ENCODE measurements at regions of chr19 and their contacts with region 1.

Region 1: DNA sequence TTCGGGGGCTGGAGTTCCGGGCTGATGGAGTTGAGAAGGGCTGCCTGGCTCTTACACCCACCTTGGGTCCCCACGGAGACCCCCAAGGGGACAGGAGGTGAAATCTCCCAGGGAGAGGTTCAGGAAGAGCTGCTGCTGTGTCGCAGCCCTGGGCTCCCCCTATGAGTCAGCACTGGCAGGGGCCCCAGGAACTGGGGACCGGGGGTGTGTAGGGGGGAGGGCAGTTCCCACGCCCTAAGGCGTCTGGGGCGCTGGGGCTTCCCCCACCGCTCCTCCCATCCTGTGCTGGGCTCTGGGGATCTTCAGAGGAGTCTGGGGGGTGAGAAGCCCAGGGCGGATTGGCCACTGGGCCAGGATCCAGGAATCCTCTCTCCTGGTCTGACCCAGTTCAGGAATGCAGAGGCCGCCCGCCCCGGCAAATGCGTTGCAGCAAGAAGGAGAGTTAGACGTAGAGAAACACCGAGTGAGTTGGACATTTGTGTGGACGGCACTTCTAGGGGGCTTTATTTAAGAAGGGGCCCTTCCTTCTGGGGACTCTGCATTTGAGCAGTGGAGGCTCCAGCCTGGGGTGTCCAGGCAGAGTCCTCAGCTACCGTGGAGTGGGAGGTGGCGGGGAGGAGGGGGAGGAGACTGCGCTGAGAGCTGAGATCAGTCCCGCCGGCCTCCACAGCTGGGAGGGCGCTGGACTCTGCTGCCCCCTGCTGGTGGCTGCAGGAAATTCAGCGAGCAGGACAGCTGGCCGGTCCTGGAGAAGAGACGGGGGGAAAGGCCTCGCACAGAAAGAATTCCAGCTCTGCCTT is 15.0 kb upstream of the NANOS3 start:
- DNase-seq: peak; percentile 92

Region 2: DNA sequence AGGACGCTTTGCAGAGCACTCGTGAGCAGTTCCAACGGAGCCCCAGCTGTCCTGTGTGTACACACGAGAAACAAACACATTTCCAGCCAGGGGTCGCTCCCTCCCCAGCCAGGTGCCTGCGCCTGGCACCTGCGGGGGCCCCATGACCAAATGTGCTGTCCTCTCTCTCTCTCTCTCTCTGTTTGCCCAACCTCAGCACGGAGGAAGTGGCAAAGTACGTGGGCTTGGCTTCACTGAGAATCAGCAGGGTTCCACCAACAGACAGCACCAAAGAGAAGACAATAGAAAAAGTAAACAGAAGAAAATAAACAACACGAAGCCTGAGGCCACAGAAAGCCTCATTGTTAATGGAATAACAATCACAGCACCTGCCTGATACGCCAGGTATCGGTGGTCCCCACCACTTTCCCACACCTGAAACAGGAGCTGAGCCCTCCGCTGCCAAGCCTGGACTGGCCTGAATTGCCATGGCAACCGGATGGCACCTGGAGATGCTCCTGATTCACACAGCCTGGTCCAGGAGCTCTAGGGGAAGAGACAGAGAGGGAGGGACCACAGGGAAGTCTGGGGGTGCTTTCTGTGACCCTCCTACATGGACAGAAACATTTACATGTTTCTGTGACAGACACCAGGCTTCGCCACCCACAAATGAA is 251.8 kb before region 1 on chr19:
- in situ Hi-C with region 1: loop called (anchors 10 kb)
- DNase-seq: peak; percentile 8

Region 3: GRCh38 chr19:14366498-14366915 is 504.6 kb after region 1 on chr19:
- in situ Hi-C with region 1: no loop called
- DNase-seq: peak; percentile 81